ENCODE measurements at regions of chr3 and their contacts with region 1.

Region 1: GRCh38 chr3:187738331-187739093 is 6.8 kb downstream of the BCL6 start:
- DNase-seq: peak; percentile 82
- H3K4me3 Mint-ChIP-seq: peak overlapping the region; percentile 90
- H3K27ac Mint-ChIP-seq: peak overlapping the region; percentile 99
- H3K4me1 Mint-ChIP-seq: peaks cover 44% of the 10 kb centered on the region
- H3K27me3 Mint-ChIP-seq: no peaks in the 10 kb centered on the region

Region 2: DNA sequence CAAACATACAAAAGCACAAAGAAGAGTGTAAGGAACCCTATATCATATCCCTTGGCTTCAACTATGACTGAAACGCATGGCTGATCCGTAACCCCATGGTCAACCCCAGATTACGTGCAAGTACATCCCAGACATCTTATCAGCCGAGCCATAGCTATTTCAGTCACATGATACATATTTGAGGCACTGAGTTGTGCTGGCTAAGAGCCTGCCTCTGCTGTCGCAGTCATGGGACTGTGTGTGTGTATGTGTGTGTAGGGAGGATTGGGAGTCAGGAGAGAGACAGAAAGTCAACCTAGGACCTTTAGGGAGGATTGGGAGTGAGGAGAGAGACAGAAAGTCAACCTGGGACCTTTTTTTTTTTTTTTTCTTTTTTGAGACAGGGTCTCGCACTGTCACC is 799.8 kb before region 1 on chr3:
- CTCF ChIA-PET with region 1: no interaction called
- POLR2A ChIA-PET with region 1: no interaction called
- intact Hi-C with region 1: no loop called
- DNase-seq: no peak
- H3K4me3 Mint-ChIP-seq: no peak overlapping the region
- H3K27ac Mint-ChIP-seq: no peak overlapping the region
- H3K4me1 Mint-ChIP-seq: peaks cover 59% of the 10 kb centered on the region
- H3K27me3 Mint-ChIP-seq: no peaks in the 10 kb centered on the region

Region 3: DNA sequence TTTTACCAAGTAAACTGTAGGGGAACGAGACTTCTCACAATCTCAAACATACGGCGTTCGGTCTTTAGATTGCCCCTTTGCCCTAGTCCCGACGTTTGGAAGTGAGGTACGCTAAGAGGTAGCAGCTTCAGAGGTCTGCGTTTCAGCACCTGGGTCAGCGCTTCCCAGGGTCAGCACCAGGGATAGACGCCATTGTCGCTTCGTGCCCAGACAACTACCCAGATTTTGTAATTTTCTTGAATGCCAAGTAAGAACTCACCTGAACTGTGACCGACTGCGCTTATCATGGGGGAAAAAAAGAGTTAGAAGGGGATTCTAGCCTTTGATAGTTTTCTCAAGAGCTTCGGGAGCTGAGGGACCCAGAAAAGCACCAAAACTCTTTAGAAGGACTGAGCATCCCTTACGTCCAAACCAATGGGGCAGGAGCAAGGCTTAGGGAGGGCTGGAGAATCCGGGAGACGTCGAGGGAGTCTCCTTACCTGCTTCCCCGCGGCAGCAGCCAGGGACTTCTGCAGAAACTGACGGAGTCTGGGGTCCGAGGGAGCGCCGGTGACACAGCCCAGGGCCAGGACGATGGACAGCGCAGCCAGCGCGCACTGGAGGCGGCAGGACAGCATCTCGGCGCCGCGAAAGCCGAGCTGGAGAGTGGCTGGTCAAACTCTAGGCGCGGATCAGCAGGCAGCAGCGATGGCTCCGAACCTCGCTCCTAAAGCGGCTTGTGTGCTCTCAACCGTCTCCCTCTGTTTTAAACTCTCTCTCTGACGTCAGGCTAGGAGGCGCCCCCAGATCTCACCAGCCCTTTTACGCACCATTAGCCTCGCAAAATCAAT is 68.6 kb before region 1 on chr3 and contains the start of gene SST:
- CTCF ChIA-PET with region 1: no interaction called
- POLR2A ChIA-PET with region 1: no interaction called
- intact Hi-C with region 1: no loop called
- DNase-seq: peak; percentile 49
- H3K4me3 Mint-ChIP-seq: no peak within 1 kb of the TSS
- H3K27ac Mint-ChIP-seq: no peak within 1 kb of the TSS
- H3K4me1 Mint-ChIP-seq: peaks cover 6% of the 10 kb centered on the region
- H3K27me3 Mint-ChIP-seq: peaks cover 65% of the 10 kb centered on the region
- total RNA-seq, gene SST: not detected

Region 4: GRCh38 chr3:187974871-187975271 is 236.4 kb after region 1 on chr3:
- CTCF ChIA-PET with region 1: interaction called, 34 read pairs
- POLR2A ChIA-PET with region 1: interaction called, 47 read pairs
- intact Hi-C with region 1: no loop called
- DNase-seq: no peak
- H3K4me3 Mint-ChIP-seq: peak overlapping the region; percentile 62
- H3K27ac Mint-ChIP-seq: peak overlapping the region; percentile 92
- H3K4me1 Mint-ChIP-seq: peaks cover 63% of the 10 kb centered on the region
- H3K27me3 Mint-ChIP-seq: no peaks in the 10 kb centered on the region

Region 5: DNA sequence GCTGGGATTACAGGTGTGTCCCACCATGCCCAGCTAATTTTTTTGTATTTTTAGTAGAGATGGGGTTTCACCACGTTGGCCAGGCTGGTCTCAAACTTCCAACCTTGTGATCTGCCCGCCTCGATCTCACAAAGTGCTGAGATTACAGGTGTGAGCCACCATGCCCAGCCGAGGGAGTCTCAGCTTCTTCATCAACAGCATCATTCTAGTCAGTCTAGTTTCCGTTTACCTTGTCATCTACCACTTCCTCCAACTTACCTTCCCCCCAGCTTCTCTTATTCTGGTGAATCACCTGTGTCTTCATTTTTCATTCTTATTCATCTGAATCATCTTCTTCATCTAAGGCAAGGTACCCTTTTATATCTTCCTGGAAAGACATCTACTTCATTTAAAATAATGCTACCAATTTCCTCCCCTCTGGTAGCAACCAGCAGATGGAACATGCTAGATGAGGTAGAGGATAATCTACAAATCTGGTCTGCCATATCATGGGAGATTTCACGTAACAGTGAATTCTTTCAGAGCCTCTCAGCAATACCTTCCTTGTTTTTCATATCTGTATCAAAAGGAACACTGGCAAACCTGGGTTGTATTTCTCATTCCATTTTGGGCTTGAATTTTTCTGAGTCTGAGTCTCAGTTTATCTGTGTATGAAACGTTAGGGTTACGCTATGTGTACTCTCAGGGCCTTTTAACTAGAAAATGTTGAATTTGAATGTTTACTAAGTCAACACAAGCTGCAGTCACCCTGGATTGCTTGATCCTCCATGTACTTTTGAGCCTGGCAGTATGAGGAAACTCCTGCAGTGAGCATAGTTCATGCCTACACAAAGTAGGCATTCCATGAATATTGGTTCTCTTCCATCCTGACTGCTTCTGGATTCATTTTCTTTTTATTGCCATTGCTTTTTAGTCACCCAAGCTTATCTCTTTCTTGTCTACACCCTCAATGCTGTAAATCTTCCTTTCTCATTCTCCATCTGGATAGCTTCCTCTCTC is 432.2 kb after region 1 on chr3:
- CTCF ChIA-PET with region 1: interaction called, 24 read pairs
- POLR2A ChIA-PET with region 1: no interaction called
- intact Hi-C with region 1: loop called (anchors 1 kb)
- DNase-seq: peak; percentile 82
- H3K4me3 Mint-ChIP-seq: peak overlapping the region; percentile 28
- H3K27ac Mint-ChIP-seq: peak overlapping the region; percentile 89
- H3K4me1 Mint-ChIP-seq: peaks cover 58% of the 10 kb centered on the region
- H3K27me3 Mint-ChIP-seq: no peaks in the 10 kb centered on the region

Region 6: DNA sequence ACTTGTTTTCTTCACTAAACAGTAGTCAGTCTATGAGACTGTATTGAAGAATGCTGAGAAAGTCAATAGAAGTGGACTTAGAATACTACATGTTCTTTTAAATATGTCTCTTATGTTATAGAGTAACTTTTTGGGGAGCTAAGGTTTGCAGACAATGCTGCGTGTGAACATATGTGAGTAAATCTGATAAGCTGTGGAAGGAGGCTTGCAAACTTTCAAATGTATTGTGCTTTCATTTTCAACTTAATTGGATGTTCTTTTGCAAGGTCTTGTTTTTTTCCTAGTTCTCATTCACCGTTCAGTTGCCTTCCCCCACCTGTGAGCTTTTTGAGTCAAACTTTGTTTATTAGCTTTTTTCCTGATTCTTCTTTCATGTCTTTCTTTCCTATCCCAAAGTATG is 591.6 kb after region 1 on chr3:
- CTCF ChIA-PET with region 1: interaction called, 12 read pairs
- POLR2A ChIA-PET with region 1: interaction called, 3 read pairs
- intact Hi-C with region 1: no loop called
- DNase-seq: no peak
- H3K4me3 Mint-ChIP-seq: no peak overlapping the region
- H3K27ac Mint-ChIP-seq: no peak overlapping the region
- H3K4me1 Mint-ChIP-seq: peaks cover 42% of the 10 kb centered on the region
- H3K27me3 Mint-ChIP-seq: no peaks in the 10 kb centered on the region

Region 7: GRCh38 chr3:188683032-188683521 is 944.6 kb after region 1 on chr3:
- CTCF ChIA-PET with region 1: interaction called, 7 read pairs
- POLR2A ChIA-PET with region 1: no interaction called
- intact Hi-C with region 1: loop called (anchors 5 kb)
- DNase-seq: peak; percentile 74
- H3K4me3 Mint-ChIP-seq: no peak overlapping the region
- H3K27ac Mint-ChIP-seq: peak overlapping the region; percentile 40
- H3K4me1 Mint-ChIP-seq: peaks cover 41% of the 10 kb centered on the region
- H3K27me3 Mint-ChIP-seq: no peaks in the 10 kb centered on the region

Region 8: GRCh38 chr3:188788621-188789081 is 1050.1 kb after region 1 on chr3:
- CTCF ChIA-PET with region 1: interaction called, 12 read pairs
- POLR2A ChIA-PET with region 1: interaction called, 6 read pairs
- intact Hi-C with region 1: loop called (anchors 1 kb)
- DNase-seq: peak; percentile 88
- H3K4me3 Mint-ChIP-seq: no peak overlapping the region
- H3K27ac Mint-ChIP-seq: no peak overlapping the region
- H3K4me1 Mint-ChIP-seq: peaks cover 2% of the 10 kb centered on the region
- H3K27me3 Mint-ChIP-seq: no peaks in the 10 kb centered on the region

Region 9: GRCh38 chr3:189132231-189132707 is 1393.8 kb after region 1 on chr3:
- CTCF ChIA-PET with region 1: interaction called, 17 read pairs
- POLR2A ChIA-PET with region 1: no interaction called
- intact Hi-C with region 1: loop called (anchors 2 kb)
- DNase-seq: peak; percentile 90
- H3K4me3 Mint-ChIP-seq: peak overlapping the region; percentile 50
- H3K27ac Mint-ChIP-seq: peak overlapping the region; percentile 83
- H3K4me1 Mint-ChIP-seq: peaks cover 26% of the 10 kb centered on the region
- H3K27me3 Mint-ChIP-seq: no peaks in the 10 kb centered on the region